IMR-90 (cell line): ENCODE measurements at regions of chr4 and their contacts with region 1.

Region 1: DNA sequence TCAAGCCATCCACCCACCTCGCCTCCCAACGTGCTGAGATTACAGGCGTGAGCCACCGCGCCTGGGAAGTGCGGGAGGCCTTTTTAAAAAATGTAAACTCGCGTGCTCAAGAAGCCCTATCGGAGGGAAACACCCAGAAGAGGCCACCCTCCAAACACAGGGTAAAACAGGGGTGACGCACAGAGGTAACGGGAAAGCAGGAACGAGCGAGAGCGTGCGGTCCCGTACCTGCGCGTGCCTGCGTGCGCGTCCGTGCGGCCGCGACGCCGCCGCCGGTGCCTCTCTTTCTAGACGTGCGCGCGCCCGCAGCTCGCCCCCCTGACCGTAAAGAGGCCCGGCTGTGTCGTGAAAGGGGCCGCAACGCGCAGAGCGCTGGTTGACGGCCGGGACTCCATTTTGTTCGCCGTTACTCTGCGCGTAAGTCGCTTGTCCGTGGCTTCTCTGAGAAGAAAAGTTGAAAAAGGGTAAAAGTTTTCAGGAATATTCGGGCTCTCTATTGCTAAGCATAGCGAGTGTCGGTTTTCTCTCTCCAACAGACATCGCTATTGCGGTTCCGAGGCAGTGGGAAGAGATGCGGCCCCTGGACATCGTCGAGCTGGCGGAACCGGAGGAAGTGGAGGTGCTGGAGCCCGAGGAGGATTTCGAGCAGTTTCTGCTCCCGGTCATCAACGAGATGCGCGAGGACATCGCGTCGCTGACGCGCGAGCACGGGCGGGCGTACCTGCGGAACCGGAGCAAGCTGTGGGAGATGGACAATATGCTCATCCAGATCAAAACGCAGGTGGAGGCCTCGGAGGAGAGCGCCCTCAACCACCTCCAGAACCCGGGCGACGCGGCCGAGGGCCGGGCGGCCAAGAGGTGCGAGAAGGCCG is at the start of gene MRFAP1:
- DNase-seq: peak; percentile 95
- ATAC-seq: peak; percentile 94
- H3K4me3 ChIP-seq: peak within 1 kb of the TSS; percentile 82
- H3K27ac ChIP-seq: peak within 1 kb of the TSS; percentile 91
- H3K4me1 ChIP-seq: peaks cover 10% of the 10 kb centered on the region
- H3K27me3 ChIP-seq: no peaks in the 10 kb centered on the region
- CTCF ChIP-seq: no peak
- POLR2A ChIP-seq: peak; percentile 92
- RAD21 ChIP-seq: no peak
- total RNA-seq, gene MRFAP1: 65.4 and 131 TPM in 2 replicates

Region 2: GRCh38 chr4:6709230-6710114 is 68.9 kb after region 1 on chr4 and contains the start of gene MRFAP1L1:
- CTCF ChIA-PET with region 1: no interaction called
- POLR2A ChIA-PET with region 1: no interaction called
- dilution Hi-C with region 1: no loop called
- in situ Hi-C with region 1: no loop called
- intact Hi-C with region 1: loop called (anchors 2 kb)
- DNase-seq: peak; percentile 97
- ATAC-seq: peak; percentile 93
- H3K4me3 ChIP-seq: peak within 1 kb of the TSS; percentile 85
- H3K27ac ChIP-seq: peak within 1 kb of the TSS; percentile 78
- H3K4me1 ChIP-seq: peaks cover 2% of the 10 kb centered on the region
- H3K27me3 ChIP-seq: no peaks in the 10 kb centered on the region
- CTCF ChIP-seq: no peak; the same call in 1 of the 2 replicates
- POLR2A ChIP-seq: peak; percentile 59; the same call in 1 of the 2 replicates
- RAD21 ChIP-seq: no peak
- total RNA-seq, gene MRFAP1L1: 31.7 and 64.2 TPM in 2 replicates

Region 3: DNA sequence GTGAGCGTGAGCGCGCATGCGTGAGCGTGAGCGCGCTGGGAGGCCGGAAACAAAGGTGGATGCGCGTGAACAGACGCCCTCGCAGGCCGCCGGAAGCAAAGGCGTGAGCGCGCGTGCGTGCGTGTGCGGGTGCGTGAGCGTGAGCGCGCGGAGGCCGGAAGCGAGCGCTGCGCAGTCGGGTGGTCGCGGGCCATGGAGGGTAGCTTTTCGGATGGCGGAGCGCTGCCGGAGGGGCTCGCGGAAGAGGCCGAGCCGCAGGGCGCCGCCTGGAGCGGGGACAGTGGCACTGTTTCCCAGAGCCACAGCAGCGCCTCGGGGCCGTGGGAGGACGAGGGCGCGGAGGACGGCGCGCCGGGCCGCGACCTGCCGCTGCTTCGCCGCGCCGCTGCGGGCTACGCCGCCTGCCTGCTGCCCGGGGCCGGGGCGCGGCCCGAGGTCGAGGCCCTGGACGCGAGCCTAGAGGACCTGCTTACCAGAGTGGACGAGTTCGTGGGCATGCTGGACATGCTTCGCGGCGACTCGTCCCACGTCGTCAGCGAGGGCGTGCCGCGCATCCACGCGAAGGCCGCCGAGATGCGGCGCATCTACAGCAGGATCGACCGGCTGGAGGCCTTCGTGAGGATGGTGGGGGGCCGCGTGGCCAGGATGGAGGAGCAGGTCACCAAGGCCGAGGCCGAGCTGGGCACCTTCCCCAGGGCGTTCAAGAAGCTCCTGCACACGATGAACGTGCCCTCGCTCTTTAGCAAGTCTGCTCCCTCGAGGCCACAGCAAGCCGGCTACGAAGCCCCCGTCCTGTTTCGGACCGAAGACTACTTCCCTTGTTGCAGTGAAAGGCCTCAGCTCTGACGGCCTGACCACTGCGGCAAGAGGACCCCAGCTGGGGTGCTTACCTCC is 75.7 kb after region 1 on chr4 and contains the start of gene BLOC1S4:
- CTCF ChIA-PET with region 1: no interaction called
- POLR2A ChIA-PET with region 1: no interaction called
- dilution Hi-C with region 1: no loop called
- in situ Hi-C with region 1: no loop called
- intact Hi-C with region 1: loop called (anchors 2 kb)
- DNase-seq: peak; percentile 92
- ATAC-seq: peak; percentile 83
- H3K4me3 ChIP-seq: peak within 1 kb of the TSS; percentile 87
- H3K27ac ChIP-seq: peak within 1 kb of the TSS; percentile 88
- H3K4me1 ChIP-seq: no peaks in the 10 kb centered on the region
- H3K27me3 ChIP-seq: no peaks in the 10 kb centered on the region
- CTCF ChIP-seq: 0 out of 2 replicates have a peak, but pooled peaks have one; percentile 14
- POLR2A ChIP-seq: peak; percentile 66; the same call in 1 of the 2 replicates
- RAD21 ChIP-seq: no peak
- total RNA-seq, gene BLOC1S4: 8.8 and 13.3 TPM in 2 replicates